Gastrocnemius medialis (tissue), 4 donors: ENCODE measurements at regions of chrX and their contacts with region 1.

Region 1: DNA sequence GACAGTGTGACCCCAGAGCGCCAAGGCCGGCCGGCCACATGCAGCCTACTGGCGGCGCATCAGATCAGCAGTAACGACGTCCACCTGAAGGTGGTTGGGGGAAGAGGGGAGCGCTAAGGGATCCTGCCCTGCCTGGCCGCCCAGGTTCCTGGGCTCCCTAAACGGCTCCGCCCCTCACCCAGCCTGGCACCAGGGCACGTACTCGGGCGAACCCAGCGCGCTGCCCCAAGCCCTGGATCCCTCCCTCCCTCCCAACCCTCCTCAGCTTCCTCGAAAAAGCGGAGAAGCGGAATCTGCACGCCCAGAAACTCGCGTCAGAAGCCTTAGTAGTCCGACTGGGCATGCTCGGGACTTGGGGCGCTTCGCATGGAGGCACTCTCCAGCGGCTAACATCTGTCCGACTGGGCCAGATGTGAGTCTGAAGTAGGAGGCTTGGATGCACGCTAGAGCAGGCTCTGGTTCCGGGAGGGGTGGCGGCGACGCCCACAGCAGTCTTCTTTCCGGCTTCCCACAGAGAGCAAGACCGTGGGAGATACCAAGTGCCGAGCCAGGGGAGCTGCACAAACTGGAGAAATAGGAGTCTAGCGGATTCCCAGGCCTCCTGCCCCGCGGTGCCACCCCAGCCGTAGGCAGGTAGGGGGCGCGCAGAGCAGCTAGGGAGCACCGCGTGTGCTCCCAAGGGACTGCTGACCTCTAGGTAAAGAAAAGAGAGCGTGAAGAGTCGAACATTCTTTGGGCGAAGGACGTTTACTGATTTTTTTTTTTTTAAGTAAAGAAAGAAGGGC is 114.3 kb upstream of the TEX13C start:
- DNase-seq: peak; percentile 12 to 43
- ATAC-seq: peak; percentile 39 to 45
- H3K4me3 ChIP-seq: peak overlapping the region; percentile 32 to 48 (median 42)
- H3K27ac ChIP-seq: peak overlapping the region in 2 of 4 donors; percentile 43 to 44
- H3K4me1 ChIP-seq: no peaks in the 10 kb centered on the region
- H3K27me3 ChIP-seq: peaks cover 0 to 26% (median 17%) of the 10 kb centered on the region in 3 donors
- CTCF ChIP-seq: no peak
- POLR2A ChIP-seq: no peak

Region 2: GRCh38 chrX:124863303-124863702 is 342.0 kb before region 1 on chrX:
- in situ Hi-C with region 1: no loop called
- intact Hi-C with region 1: loop called (anchors 5 kb)
- DNase-seq: no peak
- ATAC-seq: no peak
- H3K4me3 ChIP-seq: no peak overlapping the region
- H3K27ac ChIP-seq: no peak overlapping the region
- H3K4me1 ChIP-seq: no peaks in the 10 kb centered on the region
- H3K27me3 ChIP-seq: peaks cover 0 to 2% (median 0%) of the 10 kb centered on the region in 3 donors
- CTCF ChIP-seq: no peak
- POLR2A ChIP-seq: no peak